AG04449 (cell line): ENCODE measurements at regions of chr11 and their contacts with region 1.

Region 1: GRCh38 chr11:66677599-66678375 is at the start of gene RBM4B:
- DNase-seq: peak; percentile 59
- H3K4me3 ChIP-seq: peak within 1 kb of the TSS; percentile 75
- CTCF ChIP-seq: no peak

Region 2: DNA sequence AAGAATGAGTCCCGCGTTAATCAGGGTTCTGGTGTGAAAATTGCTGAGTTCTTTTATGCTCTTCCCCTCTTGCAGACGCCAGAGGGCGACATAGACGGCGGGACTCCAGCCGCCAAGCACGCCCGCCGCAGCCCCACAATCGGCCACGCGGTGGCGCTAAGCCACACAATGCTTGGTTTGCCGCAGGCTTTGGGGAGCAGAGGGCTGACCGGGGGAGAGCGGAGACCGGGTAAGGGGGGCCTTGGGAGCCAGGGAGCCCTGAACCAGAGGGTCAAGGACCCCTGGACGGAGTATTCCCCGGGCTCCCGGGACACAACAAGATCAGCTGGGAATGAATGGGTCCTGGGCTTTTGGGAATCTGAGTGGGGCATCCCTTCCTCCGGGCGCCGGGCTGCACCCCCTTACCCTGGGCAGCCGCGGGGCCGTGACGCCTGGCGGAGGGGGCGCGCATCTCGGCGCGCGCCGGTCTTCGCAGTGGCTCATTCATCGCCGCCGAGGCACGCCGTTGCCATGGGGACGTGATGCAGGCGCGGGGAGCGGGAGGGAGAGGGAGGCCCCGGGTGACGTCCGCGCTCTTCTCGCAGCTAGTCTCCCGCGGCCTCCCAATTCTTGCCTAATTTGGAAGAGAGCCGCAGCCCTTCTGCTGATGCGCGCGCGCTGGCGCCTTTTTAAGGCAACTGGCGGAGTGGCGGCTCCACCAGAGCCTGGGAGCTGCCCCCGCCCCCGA is 269.1 kb before region 1 on chr11:
- CTCF ChIA-PET with region 1: interaction called, 67 read pairs
- POLR2A ChIA-PET with region 1: interaction called, 5 read pairs
- DNase-seq: peak; percentile 61
- H3K4me3 ChIP-seq: peak overlapping the region; percentile 59
- CTCF ChIP-seq: peak; percentile 100

Region 3: GRCh38 chr11:66438504-66439466 is 239.0 kb before region 1 on chr11 and contains the start of gene MRPL11:
- CTCF ChIA-PET with region 1: interaction called, 18 read pairs
- POLR2A ChIA-PET with region 1: no interaction called
- DNase-seq: peak; percentile 67
- H3K4me3 ChIP-seq: peak within 1 kb of the TSS; percentile 85
- CTCF ChIP-seq: peak; percentile 79

Region 4: DNA sequence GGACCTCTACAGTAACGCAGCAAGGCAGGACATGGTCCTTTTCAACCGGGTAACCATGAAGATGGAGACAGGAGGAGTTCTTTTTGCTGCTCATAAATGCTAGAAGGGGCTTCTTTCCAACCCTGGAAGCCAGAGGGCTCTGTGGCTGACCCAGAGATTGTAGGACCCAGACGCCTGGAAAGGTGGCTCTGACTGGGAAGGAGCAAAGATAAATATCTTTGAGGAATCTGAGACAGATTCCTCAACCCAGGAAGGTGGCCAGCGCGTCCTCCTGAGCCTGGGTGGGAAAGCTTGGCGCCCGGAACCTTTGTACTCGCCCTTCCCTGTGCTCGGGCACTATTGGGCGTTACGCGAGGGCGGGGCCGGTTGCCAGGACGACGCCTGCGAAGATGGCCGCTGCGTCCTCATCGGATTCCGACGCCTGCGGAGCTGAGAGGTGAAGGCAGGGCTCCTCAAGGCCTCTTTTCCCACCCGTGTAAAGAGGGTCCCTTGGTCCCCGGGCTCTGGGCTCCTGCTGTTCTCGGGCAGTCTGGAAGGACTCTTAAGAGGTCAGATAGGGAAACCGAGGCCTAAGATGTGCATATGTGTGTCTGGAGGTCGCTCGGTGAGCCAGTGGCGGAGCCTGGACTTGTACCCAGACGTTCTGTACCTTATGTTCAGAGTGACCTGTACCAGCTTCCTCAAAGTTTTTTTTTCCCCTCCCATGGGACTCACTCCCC is 167.4 kb before region 1 on chr11 and contains the start of gene BBS1:
- CTCF ChIA-PET with region 1: interaction called, 12 read pairs
- POLR2A ChIA-PET with region 1: interaction called, 3 read pairs
- DNase-seq: peak; percentile 4
- H3K4me3 ChIP-seq: peak within 1 kb of the TSS; percentile 87
- CTCF ChIP-seq: no peak

Region 5: DNA sequence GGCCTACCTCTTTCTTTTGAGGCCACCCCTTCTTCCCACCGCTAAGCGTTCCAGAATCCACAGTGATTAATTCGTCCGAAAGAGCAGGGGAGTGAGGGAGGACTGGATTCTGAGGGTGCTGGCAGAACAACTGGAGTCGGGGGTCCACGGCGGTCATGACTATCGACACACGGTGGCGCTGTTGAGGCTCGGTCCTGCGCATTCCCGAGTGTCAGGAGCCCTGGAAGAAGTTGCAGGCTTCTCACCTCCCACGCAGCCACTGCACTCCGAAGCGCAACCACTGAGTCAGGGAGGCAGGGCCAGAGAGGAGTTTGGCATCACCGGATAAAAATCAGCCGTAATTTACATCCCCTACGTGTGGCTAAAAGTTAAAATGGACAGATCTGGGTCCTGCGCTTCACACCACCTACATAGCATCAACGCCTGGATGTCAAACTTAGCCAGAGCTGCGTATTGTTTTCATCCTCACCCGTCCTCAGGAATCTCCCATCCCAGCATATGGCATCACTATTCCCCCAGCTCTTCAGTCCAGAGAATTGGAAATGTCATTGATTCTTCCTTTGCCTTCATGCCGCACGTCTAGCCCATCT is 98.7 kb before region 1 on chr11:
- CTCF ChIA-PET with region 1: interaction called, 115 read pairs
- POLR2A ChIA-PET with region 1: interaction called, 4 read pairs
- DNase-seq: no peak
- H3K4me3 ChIP-seq: no peak overlapping the region
- CTCF ChIP-seq: peak; percentile 89

Region 6: DNA sequence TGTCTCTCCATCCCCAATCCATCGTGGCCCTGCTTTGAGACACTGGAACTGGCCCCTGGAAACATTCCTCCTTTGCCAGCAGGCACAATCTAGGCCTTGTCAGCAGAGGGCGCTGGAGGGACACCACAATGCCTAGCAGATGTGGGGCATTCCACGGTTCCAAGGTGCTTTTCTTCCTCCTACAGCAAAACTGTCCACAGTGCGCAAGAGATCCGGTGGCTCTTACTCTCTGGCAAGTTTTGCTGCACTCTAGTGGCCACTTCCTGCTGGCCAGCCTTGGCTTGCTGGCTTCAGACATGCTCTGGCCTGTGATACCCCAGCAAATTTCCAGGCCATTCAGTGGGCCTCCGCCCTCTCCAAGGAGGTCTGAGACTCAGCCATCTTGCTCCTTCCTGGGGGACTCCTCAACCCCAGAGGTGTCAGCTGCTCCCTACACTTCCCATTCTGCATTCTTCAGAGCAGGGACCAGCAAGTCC is 17.0 kb after region 1 on chr11:
- CTCF ChIA-PET with region 1: interaction called, 35 read pairs
- POLR2A ChIA-PET with region 1: interaction called, 3 read pairs
- DNase-seq: peak; percentile 82
- H3K4me3 ChIP-seq: no peak overlapping the region
- CTCF ChIP-seq: peak; percentile 78

Region 7: GRCh38 chr11:66710384-66710927 is 32.7 kb after region 1 on chr11:
- CTCF ChIA-PET with region 1: no interaction called
- POLR2A ChIA-PET with region 1: no interaction called
- DNase-seq: no peak
- H3K4me3 ChIP-seq: no peak overlapping the region
- CTCF ChIP-seq: no peak

Region 8: DNA sequence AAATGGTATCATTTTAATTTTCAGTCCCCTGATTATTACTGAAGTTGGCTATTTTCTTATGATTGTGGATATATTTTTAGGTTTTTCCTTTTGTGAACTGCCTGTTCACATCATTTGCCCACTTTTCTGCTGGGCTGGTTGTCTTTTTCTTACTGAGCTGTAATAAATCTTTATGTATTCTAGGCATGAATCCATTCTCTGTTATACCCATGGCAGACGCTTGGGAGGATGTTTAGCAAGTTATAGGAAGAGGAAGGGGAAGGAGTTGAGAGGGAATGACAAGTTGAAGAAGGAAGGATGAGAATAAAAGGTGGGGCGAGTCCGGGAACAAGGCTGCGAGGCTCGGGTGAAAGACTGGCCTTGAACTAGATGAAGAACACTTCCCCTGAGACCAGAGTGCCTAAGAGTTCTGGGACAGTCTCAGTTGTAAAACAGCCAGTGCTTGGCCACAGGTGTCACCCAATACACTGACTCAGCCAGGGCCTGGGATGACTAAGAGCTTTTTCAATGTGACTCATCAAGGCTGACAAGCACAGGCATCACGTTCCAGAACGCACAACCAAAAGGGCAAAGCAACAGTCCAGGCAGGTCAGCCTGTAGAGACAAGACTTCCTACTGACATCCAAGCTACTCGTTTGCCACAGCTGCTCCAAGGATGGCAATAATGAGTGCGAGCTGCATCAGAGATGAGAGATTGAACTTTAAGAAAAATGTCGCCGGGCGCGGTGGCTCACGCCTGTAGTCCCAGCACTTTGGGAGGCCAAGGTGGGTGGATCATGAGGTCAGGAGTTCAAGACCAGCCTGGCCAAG is 214.3 kb after region 1 on chr11:
- CTCF ChIA-PET with region 1: no interaction called
- POLR2A ChIA-PET with region 1: no interaction called
- DNase-seq: peak; percentile 58
- H3K4me3 ChIP-seq: no peak overlapping the region
- CTCF ChIP-seq: no peak